Activated CD8-positive, alpha-beta T cell treated with anti-CD3 and anti-CD28 coated beads for 36 hours (primary cell): ENCODE measurements at regions of chr19 and their contacts with region 1.

Region 1: DNA sequence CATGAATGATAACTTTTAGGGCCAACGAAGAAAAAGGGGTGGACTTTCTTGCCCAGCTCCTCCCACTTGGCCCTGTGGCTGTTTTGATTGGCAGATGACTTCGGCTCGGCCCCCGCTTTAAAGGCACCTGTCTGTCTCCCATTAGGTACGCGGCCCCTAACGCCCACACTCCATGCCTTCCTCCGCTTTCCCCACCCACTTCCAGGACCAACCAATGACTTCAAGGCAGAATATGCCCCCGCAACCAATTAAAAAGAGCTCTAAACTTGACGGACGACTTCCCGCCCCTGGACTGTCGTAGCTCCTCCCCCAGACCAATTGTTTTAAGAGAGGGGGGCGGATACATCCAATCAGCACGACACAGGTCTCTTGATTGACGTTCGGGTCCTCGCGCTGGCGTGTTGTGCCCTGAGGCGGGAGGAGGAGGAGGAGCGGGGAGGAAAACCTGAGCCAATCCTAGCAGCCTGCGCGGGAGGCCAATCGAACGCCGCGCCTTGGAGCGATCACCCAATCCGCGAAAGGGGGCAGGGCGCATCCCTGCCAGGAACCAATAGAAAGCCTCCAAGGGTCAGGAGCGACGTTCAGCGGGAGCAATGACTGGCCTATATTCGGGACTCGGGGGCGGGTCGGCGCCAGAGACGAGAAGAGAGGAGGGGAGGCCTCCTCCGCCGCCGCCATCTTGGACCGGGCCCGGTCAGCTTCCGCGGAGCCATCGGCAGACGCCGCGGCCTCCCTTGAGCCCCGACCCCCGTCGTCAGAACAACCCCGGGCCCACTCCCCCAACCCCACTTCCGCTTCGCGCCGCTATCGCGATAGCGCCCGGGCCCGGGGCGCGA is at the start of gene CNOT3:
- DNase-seq: peak; percentile 100
- ATAC-seq: peak; percentile 85
- H3K4me3 Mint-ChIP-seq: peak within 1 kb of the TSS; percentile 87
- H3K27ac Mint-ChIP-seq: peak within 1 kb of the TSS; percentile 92
- H3K4me1 Mint-ChIP-seq: peaks cover 47% of the 10 kb centered on the region
- H3K27me3 Mint-ChIP-seq: no peaks in the 10 kb centered on the region
- CTCF ChIP-seq: no peak
- total RNA-seq, gene CNOT3: 48.8 to 50.7 TPM

Region 2: GRCh38 chr19:54152878-54153524 is 15.7 kb after region 1 on chr19:
- CTCF ChIA-PET with region 1: interaction called, 3 read pairs
- POLR2A ChIA-PET with region 1: interaction called, 10 read pairs
- intact Hi-C with region 1: no loop called
- DNase-seq: no peak
- ATAC-seq: no peak
- H3K4me3 Mint-ChIP-seq: no peak overlapping the region
- H3K27ac Mint-ChIP-seq: peak overlapping the region; percentile 63
- H3K4me1 Mint-ChIP-seq: peaks cover 25% of the 10 kb centered on the region
- H3K27me3 Mint-ChIP-seq: no peaks in the 10 kb centered on the region
- CTCF ChIP-seq: no peak

Region 3: DNA sequence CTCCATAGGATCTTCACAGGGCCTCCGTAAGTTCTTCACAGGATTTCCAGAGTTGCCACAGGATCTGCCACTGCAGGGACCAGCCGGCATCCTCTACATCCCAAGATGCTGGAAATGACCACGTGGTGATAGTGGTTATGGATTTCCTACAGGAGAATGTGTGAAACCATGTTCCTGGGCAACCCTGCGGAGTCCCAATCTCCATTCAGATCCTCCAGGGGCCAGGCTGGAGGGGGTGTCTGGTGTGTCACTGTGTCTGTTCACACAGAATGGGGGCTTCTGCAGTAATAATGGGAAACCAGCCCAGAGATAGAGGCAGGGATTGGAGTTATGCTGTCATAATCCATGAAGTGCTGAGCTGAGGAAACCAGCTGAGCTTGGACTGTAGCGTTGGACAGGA is 96.6 kb after region 1 on chr19:
- CTCF ChIA-PET with region 1: no interaction called
- POLR2A ChIA-PET with region 1: no interaction called
- intact Hi-C with region 1: no loop called
- DNase-seq: no peak
- ATAC-seq: no peak
- H3K4me3 Mint-ChIP-seq: no peak overlapping the region
- H3K27ac Mint-ChIP-seq: no peak overlapping the region
- H3K4me1 Mint-ChIP-seq: peaks cover 3% of the 10 kb centered on the region
- H3K27me3 Mint-ChIP-seq: peaks cover 24% of the 10 kb centered on the region
- CTCF ChIP-seq: no peak